Endothelial cell of umbilical vein (primary cell): ENCODE measurements at regions of chr6 and their contacts with region 1.

Region 1: GRCh38 chr6:108896111-108896661 is 48.0 kb downstream of the ARMC2 start:
- DNase-seq: peak; percentile 81
- H3K4me3 ChIP-seq: no peak overlapping the region
- H3K27ac ChIP-seq: peak overlapping the region; percentile 96
- H3K4me1 ChIP-seq: peaks cover 22% of the 10 kb centered on the region
- H3K27me3 ChIP-seq: no peaks in the 10 kb centered on the region
- CTCF ChIP-seq: no peak
- POLR2A ChIP-seq: no peak

Region 2: GRCh38 chr6:108541838-108542759 is 354.1 kb before region 1 on chr6:
- CTCF ChIA-PET with region 1: interaction called, 211 read pairs
- POLR2A ChIA-PET with region 1: no interaction called
- dilution Hi-C with region 1: no loop called
- intact Hi-C with region 1: loop called (anchors 1 kb)
- DNase-seq: peak; percentile 83
- H3K4me3 ChIP-seq: no peak overlapping the region
- H3K27ac ChIP-seq: no peak overlapping the region
- H3K4me1 ChIP-seq: no peaks in the 10 kb centered on the region
- H3K27me3 ChIP-seq: peaks cover 0 to 8% of the 10 kb centered on the region in 2 experiments
- CTCF ChIP-seq: peak; percentile 71 to 80
- POLR2A ChIP-seq: no peak

Region 3: GRCh38 chr6:108737594-108738546 is 158.3 kb before region 1 on chr6:
- CTCF ChIA-PET with region 1: interaction called, 4 read pairs
- POLR2A ChIA-PET with region 1: no interaction called
- dilution Hi-C with region 1: no loop called
- intact Hi-C with region 1: loop called (anchors 5 kb)
- DNase-seq: peak; percentile 82
- H3K4me3 ChIP-seq: no peak overlapping the region
- H3K27ac ChIP-seq: peak overlapping the region; percentile 62
- H3K4me1 ChIP-seq: peaks cover 40% of the 10 kb centered on the region
- H3K27me3 ChIP-seq: no peaks in the 10 kb centered on the region
- CTCF ChIP-seq: no peak
- POLR2A ChIP-seq: no peak

Region 4: DNA sequence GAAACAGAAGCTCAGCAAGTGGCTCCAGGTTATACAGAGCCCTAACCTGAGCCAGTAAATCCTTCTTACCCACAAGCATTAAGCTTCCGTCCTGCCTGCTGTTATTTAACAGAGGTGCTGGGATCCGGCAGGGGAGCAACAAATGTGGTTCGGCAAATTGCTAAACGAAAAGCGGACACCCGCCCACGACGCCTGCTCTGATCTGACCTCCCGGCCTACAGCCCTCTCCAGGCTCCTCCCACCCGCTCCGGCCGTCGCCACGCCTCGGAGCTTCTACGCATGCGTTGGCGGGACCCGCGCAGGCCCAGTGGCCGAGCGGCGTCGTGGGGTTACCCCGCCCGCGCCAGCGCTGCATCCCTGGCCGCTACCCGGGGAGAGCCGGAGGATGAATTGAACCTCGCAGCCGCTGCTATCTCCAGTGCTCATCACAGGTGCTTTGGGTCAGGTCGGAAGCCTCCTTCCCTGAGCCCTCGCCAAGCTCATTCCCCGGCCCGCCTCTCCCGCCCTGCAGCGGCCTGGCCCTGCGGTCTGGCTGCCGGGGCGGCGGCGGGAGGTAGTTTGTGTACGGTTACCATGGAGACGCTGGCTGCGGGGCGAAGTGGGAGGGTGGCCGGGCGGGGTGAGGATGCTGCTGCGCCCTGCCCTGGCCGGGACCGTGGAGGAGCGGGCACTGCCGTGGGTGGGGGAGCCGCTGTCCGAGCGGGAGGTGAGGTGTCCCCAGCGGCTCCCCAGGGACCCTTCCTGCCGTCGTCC is 47.9 kb before region 1 on chr6 and contains the start of gene ARMC2:
- CTCF ChIA-PET with region 1: interaction called, 17 read pairs
- POLR2A ChIA-PET with region 1: no interaction called
- dilution Hi-C with region 1: no loop called
- intact Hi-C with region 1: no loop called
- DNase-seq: peak; percentile 89
- H3K4me3 ChIP-seq: peak within 1 kb of the TSS; percentile 34 to 81 (median 62)
- H3K27ac ChIP-seq: peak within 1 kb of the TSS; percentile 19
- H3K4me1 ChIP-seq: peaks cover 6% of the 10 kb centered on the region
- H3K27me3 ChIP-seq: no peaks in the 10 kb centered on the region
- CTCF ChIP-seq: no peak
- POLR2A ChIP-seq: peak; percentile 67
- total RNA-seq, gene ARMC2: 3.7 and 3.9 TPM in 2 replicates

Region 5: GRCh38 chr6:108914235-108915022 is 18.2 kb after region 1 on chr6:
- CTCF ChIA-PET with region 1: interaction called, 20 read pairs
- POLR2A ChIA-PET with region 1: no interaction called
- dilution Hi-C with region 1: no loop called
- intact Hi-C with region 1: no loop called
- DNase-seq: no peak
- H3K4me3 ChIP-seq: no peak overlapping the region
- H3K27ac ChIP-seq: no peak overlapping the region
- H3K4me1 ChIP-seq: no peaks in the 10 kb centered on the region
- H3K27me3 ChIP-seq: no peaks in the 10 kb centered on the region
- CTCF ChIP-seq: peak; percentile 40 to 46
- POLR2A ChIP-seq: no peak

Region 6: DNA sequence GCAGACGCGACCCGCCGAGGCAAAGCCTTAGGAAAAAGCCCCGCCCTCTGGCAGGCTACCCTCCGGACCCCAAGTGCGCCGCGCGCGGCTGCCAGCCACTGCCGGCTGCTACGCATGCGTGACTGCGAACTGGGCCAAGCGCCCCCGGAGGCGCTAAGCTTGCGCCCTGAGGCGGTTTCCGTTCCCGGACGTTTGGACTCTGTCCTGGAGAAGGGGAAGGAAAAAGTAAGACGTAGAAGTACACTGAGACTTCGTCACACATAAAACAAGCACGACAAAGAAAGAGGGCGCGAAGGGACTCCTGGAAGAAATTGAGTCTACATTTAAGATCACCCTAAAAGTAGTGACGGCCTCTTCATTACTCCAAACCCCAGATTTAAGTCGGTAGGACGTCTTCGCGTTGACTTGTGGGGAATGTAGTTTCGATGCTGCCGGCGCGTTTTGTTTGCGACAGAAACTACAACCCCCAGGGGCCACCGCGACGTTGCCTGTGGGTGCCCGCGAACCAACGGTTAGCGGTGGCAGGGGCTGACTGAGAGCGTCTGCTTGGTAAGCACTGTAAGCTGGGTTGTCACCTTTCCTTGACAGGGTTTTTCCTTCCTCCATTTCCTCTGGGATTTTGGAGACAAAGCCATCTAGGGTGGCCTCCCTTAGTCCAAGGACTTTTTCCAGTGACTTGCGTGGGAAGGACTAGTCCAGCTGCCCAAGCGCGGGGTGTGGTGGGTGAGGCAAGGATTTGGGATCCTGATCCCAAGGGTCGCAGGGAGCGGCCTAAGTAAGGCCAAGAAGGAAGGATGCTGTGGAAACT is 199.0 kb after region 1 on chr6 and contains the start of gene CEP57L1:
- CTCF ChIA-PET with region 1: interaction called, 12 read pairs
- POLR2A ChIA-PET with region 1: interaction called, 5 read pairs
- dilution Hi-C with region 1: no loop called
- intact Hi-C with region 1: no loop called
- DNase-seq: peak; percentile 99
- H3K4me3 ChIP-seq: peak within 1 kb of the TSS; percentile 68 to 100 (median 100)
- H3K27ac ChIP-seq: peak within 1 kb of the TSS; percentile 92
- H3K4me1 ChIP-seq: peaks cover 27% of the 10 kb centered on the region
- H3K27me3 ChIP-seq: no peaks in the 10 kb centered on the region
- CTCF ChIP-seq: peak in 1 of 2 donors; percentile 25
- POLR2A ChIP-seq: peak; percentile 87
- total RNA-seq, gene CEP57L1: 20.9 and 21.0 TPM in 2 replicates